ENCODE measurements at regions of chr16 and their contacts with region 1.

Region 1: GRCh38 chr16:30407102-30407803 is at the start of gene ZNF771:
- DNase-seq: peak; percentile 71 to 94 (median 89)
- ATAC-seq: peak; percentile 79
- H3K4me3 ChIP-seq: peak within 1 kb of the TSS; percentile 72 to 90
- H3K4me3 Mint-ChIP-seq: peak within 1 kb of the TSS; percentile 89
- H3K27ac ChIP-seq: peak within 1 kb of the TSS; percentile 61 to 69
- H3K27ac Mint-ChIP-seq: peak within 1 kb of the TSS; percentile 93
- H3K4me1 ChIP-seq: peaks cover 19% of the 10 kb centered on the region
- H3K4me1 Mint-ChIP-seq: peaks cover 26% of the 10 kb centered on the region
- H3K27me3 ChIP-seq: no peaks in the 10 kb centered on the region
- H3K27me3 Mint-ChIP-seq: no peaks in the 10 kb centered on the region
- CTCF ChIP-seq: no peak
- total RNA-seq, gene ZNF771: 0.87 to 0.92 TPM

Region 2: GRCh38 chr16:30065143-30065850 is 342.0 kb before region 1 on chr16 and contains the start of gene ALDOA:
- CTCF ChIA-PET with region 1: interaction called, 4 read pairs
- POLR2A ChIA-PET with region 1: interaction called, 3 read pairs
- intact Hi-C with region 1: loop called in 1 of 2 experiments (anchors 5 kb)
- DNase-seq: peak; percentile 82 to 97 (median 94)
- ATAC-seq: peak; percentile 82
- H3K4me3 ChIP-seq: peak within 1 kb of the TSS; percentile 94 to 99
- H3K4me3 Mint-ChIP-seq: peak within 1 kb of the TSS; percentile 98
- H3K27ac ChIP-seq: peak within 1 kb of the TSS; percentile 87 to 94
- H3K27ac Mint-ChIP-seq: peak within 1 kb of the TSS; percentile 98
- H3K4me1 ChIP-seq: peaks cover 48% of the 10 kb centered on the region
- H3K4me1 Mint-ChIP-seq: peaks cover 43% of the 10 kb centered on the region
- H3K27me3 ChIP-seq: no peaks in the 10 kb centered on the region
- H3K27me3 Mint-ChIP-seq: no peaks in the 10 kb centered on the region
- CTCF ChIP-seq: no peak
- total RNA-seq, gene ALDOA: 339 to 359 TPM

Region 3: DNA sequence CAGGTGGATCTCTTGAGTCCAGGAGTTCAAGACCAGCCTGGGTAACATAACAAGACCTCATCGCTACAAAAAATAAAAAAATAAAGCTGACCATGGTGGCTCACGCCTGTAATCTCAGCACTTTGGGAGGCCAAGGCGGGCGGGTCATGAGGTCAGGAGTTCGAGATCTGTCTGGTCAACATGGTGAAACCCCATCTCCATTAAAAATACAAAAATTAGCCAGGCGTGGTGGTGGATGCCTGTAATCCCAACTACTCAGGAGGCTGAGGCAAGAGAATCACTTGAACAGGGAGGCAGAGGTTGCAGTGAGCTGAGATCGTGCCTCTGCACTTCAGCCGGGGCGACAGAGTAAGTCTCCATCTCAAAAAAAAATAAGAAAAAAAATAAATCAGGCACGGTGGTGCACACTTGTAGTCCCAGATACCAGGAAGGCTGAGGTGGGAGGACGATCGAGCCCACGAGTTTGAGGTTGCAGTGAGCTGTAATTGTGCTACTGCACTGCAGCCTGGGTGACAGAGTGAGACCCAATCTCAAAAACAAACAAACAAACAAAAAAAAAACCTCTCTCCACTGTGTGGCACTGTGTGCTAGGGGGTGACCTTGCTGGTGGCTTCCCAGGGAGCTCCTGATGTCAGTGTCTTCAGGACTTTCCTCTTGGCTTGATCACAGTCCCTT is 264.4 kb before region 1 on chr16:
- CTCF ChIA-PET with region 1: interaction called, 7 read pairs
- POLR2A ChIA-PET with region 1: no interaction called
- intact Hi-C with region 1: loop called in 1 of 2 experiments (anchors 5 kb)
- DNase-seq: peak in 6 of 9 experiments; percentile 14 to 77 (median 40)
- ATAC-seq: peak; percentile 72
- H3K4me3 ChIP-seq: no peak overlapping the region
- H3K4me3 Mint-ChIP-seq: no peak overlapping the region
- H3K27ac ChIP-seq: no peak overlapping the region
- H3K27ac Mint-ChIP-seq: peak overlapping the region; percentile 30
- H3K4me1 ChIP-seq: peaks cover 24% of the 10 kb centered on the region
- H3K4me1 Mint-ChIP-seq: peaks cover 22% of the 10 kb centered on the region
- H3K27me3 ChIP-seq: no peaks in the 10 kb centered on the region
- H3K27me3 Mint-ChIP-seq: no peaks in the 10 kb centered on the region
- CTCF ChIP-seq: peak; percentile 44

Region 4: GRCh38 chr16:30355144-30355894 is 51.9 kb before region 1 on chr16 and contains the start of gene CD2BP2:
- CTCF ChIA-PET with region 1: interaction called, 5 read pairs
- POLR2A ChIA-PET with region 1: interaction called, 6 read pairs
- intact Hi-C with region 1: loop called in 1 of 2 experiments (anchors 2 kb)
- DNase-seq: peak; percentile 72 to 97 (median 86)
- ATAC-seq: peak; percentile 88
- H3K4me3 ChIP-seq: peak within 1 kb of the TSS; percentile 70 to 98
- H3K4me3 Mint-ChIP-seq: peak within 1 kb of the TSS; percentile 94
- H3K27ac ChIP-seq: peak within 1 kb of the TSS; percentile 63 to 98
- H3K27ac Mint-ChIP-seq: peak within 1 kb of the TSS; percentile 98
- H3K4me1 ChIP-seq: peaks cover 32% of the 10 kb centered on the region
- H3K4me1 Mint-ChIP-seq: peaks cover 27% of the 10 kb centered on the region
- H3K27me3 ChIP-seq: no peaks in the 10 kb centered on the region
- H3K27me3 Mint-ChIP-seq: no peaks in the 10 kb centered on the region
- CTCF ChIP-seq: no peak
- total RNA-seq, gene CD2BP2: 35.4 to 35.9 TPM

Region 5: GRCh38 chr16:30378236-30379204 is 28.7 kb before region 1 on chr16:
- CTCF ChIA-PET with region 1: interaction called, 50 read pairs
- POLR2A ChIA-PET with region 1: interaction called, 50 read pairs
- intact Hi-C with region 1: loop called (anchors 1 to 2 kb)
- DNase-seq: peak; percentile 99 to 100 (median 100)
- ATAC-seq: peak; percentile 78
- H3K4me3 ChIP-seq: peak overlapping the region; percentile 82 to 94
- H3K4me3 Mint-ChIP-seq: peak overlapping the region; percentile 98
- H3K27ac ChIP-seq: peak overlapping the region; percentile 99 to 100
- H3K27ac Mint-ChIP-seq: peak overlapping the region; percentile 100
- H3K4me1 ChIP-seq: peaks cover 58% of the 10 kb centered on the region
- H3K4me1 Mint-ChIP-seq: peaks cover 60% of the 10 kb centered on the region
- H3K27me3 ChIP-seq: no peaks in the 10 kb centered on the region
- H3K27me3 Mint-ChIP-seq: no peaks in the 10 kb centered on the region
- CTCF ChIP-seq: no peak

Region 6: GRCh38 chr16:30417529-30418349 is 10.5 kb after region 1 on chr16:
- CTCF ChIA-PET with region 1: interaction called, 20 read pairs
- POLR2A ChIA-PET with region 1: interaction called, 32 read pairs
- intact Hi-C with region 1: loop called in 1 of 2 experiments (anchors 1 kb)
- DNase-seq: peak; percentile 78 to 98 (median 88)
- ATAC-seq: peak; percentile 87
- H3K4me3 ChIP-seq: peak overlapping the region; percentile 52 to 72
- H3K4me3 Mint-ChIP-seq: peak overlapping the region; percentile 74
- H3K27ac ChIP-seq: peak overlapping the region; percentile 81 to 91
- H3K27ac Mint-ChIP-seq: peak overlapping the region; percentile 77
- H3K4me1 ChIP-seq: peaks cover 18% of the 10 kb centered on the region
- H3K4me1 Mint-ChIP-seq: peaks cover 7% of the 10 kb centered on the region
- H3K27me3 ChIP-seq: no peaks in the 10 kb centered on the region
- H3K27me3 Mint-ChIP-seq: no peaks in the 10 kb centered on the region
- CTCF ChIP-seq: no peak

Region 7: DNA sequence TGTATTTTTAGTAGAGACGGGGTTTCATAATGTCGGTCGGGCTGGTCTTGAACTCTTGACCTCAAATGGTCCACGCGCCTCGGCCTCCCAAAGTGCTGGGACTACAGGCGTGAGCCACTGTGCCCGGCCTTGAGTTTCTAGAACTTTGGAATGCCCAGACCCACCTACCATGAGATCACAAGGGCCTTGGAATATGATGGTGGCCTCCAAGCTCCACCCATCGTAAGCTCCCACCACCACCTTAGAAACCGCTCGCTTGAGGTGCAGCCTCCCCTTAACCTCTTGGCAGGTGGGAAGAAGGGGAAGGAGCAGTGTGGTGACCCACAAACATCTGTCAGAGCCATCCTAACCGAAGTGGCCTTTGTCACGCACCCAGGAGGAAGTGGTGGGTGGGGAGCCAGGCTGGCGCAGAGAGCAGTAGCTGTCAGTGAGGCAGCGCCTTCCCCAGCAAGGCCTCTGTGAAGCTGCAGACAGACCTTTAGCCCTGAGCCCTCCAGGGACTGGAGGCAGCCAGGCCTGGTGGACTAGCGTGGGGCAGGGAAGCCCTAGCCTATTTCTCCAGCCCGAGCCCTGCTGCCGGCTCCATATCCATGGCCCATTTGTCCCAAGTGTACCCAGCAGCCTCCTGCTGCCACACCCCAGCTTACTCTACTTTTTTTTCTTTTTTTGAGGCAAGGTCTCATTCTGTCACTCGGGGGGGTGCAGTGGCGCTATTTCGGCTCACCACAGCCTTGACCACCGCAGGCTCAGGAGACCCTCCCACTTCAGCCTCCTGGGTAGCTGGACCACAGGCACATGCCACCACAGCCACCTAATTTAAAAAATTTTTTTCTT is 51.5 kb after region 1 on chr16:
- CTCF ChIA-PET with region 1: no interaction called
- POLR2A ChIA-PET with region 1: no interaction called
- intact Hi-C with region 1: no loop called
- DNase-seq: peak; percentile 40 to 93 (median 76)
- ATAC-seq: peak; percentile 93
- H3K4me3 ChIP-seq: peak overlapping the region; percentile 5 to 22
- H3K4me3 Mint-ChIP-seq: peak overlapping the region; percentile 66
- H3K27ac ChIP-seq: peak overlapping the region; percentile 15 to 69
- H3K27ac Mint-ChIP-seq: peak overlapping the region; percentile 89
- H3K4me1 ChIP-seq: peaks cover 26% of the 10 kb centered on the region
- H3K4me1 Mint-ChIP-seq: peaks cover 48% of the 10 kb centered on the region
- H3K27me3 ChIP-seq: no peaks in the 10 kb centered on the region
- H3K27me3 Mint-ChIP-seq: no peaks in the 10 kb centered on the region
- CTCF ChIP-seq: no peak

Measured in CD8-positive, alpha-beta T cell (primary cell).